Activated T-helper 1 cell treated with anti-CD3 and anti-CD28 coated beads, Interleukin-12 subunit alpha, Interleukin-12 subunit beta, Interleukin-2, Interleukin-4 antibody, amounts not matched to agents 30 ng/mL and 10 ng/mL and 1 ng/mL, durations not matched to agents 14 hours and 24 hours and 36 hours (primary cell): ENCODE measurements at regions of chr10 and their contacts with region 1.

Region 1: GRCh38 chr10:69425511-69426298 is 9.0 kb upstream of the TACR2 start:
- DNase-seq: no peak
- H3K4me3 Mint-ChIP-seq: no peak overlapping the region
- H3K27ac Mint-ChIP-seq: no peak overlapping the region
- H3K4me1 Mint-ChIP-seq: peaks cover 37% of the 10 kb centered on the region
- H3K27me3 Mint-ChIP-seq: peaks cover 2% of the 10 kb centered on the region

Region 2: GRCh38 chr10:69639291-69640195 is 213.8 kb after region 1 on chr10:
- intact Hi-C with region 1: loop called (anchors 1 kb)
- DNase-seq: peak; percentile 38
- H3K4me3 Mint-ChIP-seq: no peak overlapping the region
- H3K27ac Mint-ChIP-seq: no peak overlapping the region
- H3K4me1 Mint-ChIP-seq: no peaks in the 10 kb centered on the region
- H3K27me3 Mint-ChIP-seq: peaks cover 3% of the 10 kb centered on the region